SK-N-SH (cell line): ENCODE measurements at regions of chr17 and their contacts with region 1.

Region 1: GRCh38 chr17:57833179-57833939 is 16.5 kb downstream of the MRPS23 start:
- DNase-seq: peak; percentile 77
- H3K4me3 ChIP-seq: peak overlapping the region in 1 of 2 experiments; percentile 21; a peak in 2 of 4 replicates
- H3K27ac ChIP-seq: peak overlapping the region in 1 of 2 experiments; percentile 81; a peak in 2 of 4 replicates
- H3K4me1 ChIP-seq: peaks cover 0 to 10% of the 10 kb centered on the region in 2 experiments; a peak in 1 of 4 replicates
- H3K27me3 ChIP-seq: no peaks in the 10 kb centered on the region
- CTCF ChIP-seq: peak; percentile 100
- EP300 ChIP-seq: 0 out of 4 replicates have a peak, but pooled peaks of 1 of the 2 experiments have one; percentile 20
- RAD21 ChIP-seq: peak; percentile 95

Region 2: GRCh38 chr17:57130761-57131461 is 702.4 kb before region 1 on chr17:
- CTCF ChIA-PET with region 1: interaction called, 79 read pairs
- POLR2A ChIA-PET with region 1: interaction called, 3 read pairs
- DNase-seq: peak; percentile 98
- H3K4me3 ChIP-seq: peak overlapping the region; percentile 28 to 46; a peak in 2 of 4 replicates
- H3K27ac ChIP-seq: peak overlapping the region in 1 of 2 experiments; percentile 50; a peak in 1 of 4 replicates
- H3K4me1 ChIP-seq: peaks cover 0 to 12% of the 10 kb centered on the region in 2 experiments; a peak in 1 of 4 replicates
- H3K27me3 ChIP-seq: no peaks in the 10 kb centered on the region
- CTCF ChIP-seq: peak; percentile 90
- EP300 ChIP-seq: 0 out of 4 replicates have a peak, but pooled peaks of 1 of the 2 experiments have one; percentile 28
- RAD21 ChIP-seq: peak; percentile 92

Region 3: GRCh38 chr17:57552114-57552624 is 281.2 kb before region 1 on chr17:
- CTCF ChIA-PET with region 1: interaction called, 10 read pairs
- POLR2A ChIA-PET with region 1: no interaction called
- DNase-seq: peak; percentile 84
- H3K4me3 ChIP-seq: no peak overlapping the region
- H3K27ac ChIP-seq: peak overlapping the region in 1 of 2 experiments; percentile 99; a peak in 2 of 4 replicates
- H3K4me1 ChIP-seq: peaks cover 6 to 86% of the 10 kb centered on the region in 2 experiments; a peak in 2 of 4 replicates
- H3K27me3 ChIP-seq: no peaks in the 10 kb centered on the region
- CTCF ChIP-seq: peak; percentile 52
- EP300 ChIP-seq: peak in 1 of 2 experiments; percentile 61; a peak in 1 of 4 replicates
- RAD21 ChIP-seq: peak; percentile 65

Region 4: DNA sequence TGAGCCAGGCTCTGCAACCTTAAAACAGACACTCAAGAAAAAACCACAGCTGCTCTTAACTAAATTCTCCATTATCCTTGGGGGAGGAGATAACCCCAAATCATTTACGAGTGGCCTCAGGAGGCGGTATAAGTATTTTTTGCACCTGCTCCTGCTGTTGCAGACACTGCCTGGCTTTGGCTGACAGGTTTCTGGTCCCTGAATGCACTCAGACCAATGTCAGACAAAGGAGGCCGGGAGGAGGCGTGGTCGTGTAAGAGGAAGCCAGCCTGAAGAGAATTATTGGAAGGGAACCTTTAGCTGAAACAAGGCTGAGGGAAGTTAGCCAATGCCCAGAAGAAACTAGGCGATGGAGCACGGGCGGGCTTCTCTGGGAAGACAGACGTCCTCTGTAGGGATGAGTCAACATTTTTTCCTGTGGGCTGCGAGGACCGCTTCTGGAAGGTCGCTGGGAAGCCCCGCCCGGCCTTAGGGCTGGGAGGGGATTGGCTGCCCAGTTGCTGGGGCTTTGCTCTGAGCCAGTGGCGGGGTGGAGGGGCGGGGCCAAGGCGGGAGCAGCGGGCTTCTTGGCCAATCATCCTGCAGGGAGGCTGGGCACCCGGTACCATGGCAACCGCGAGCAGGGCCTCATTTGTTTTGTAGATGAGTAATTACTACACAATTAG is 170.6 kb before region 1 on chr17:
- CTCF ChIA-PET with region 1: interaction called, 25 read pairs
- POLR2A ChIA-PET with region 1: no interaction called
- DNase-seq: peak; percentile 97
- H3K4me3 ChIP-seq: peak overlapping the region; percentile 45 to 47
- H3K27ac ChIP-seq: peak overlapping the region; percentile 99 to 100
- H3K4me1 ChIP-seq: peaks cover 28 to 79% of the 10 kb centered on the region in 2 experiments
- H3K27me3 ChIP-seq: no peaks in the 10 kb centered on the region
- CTCF ChIP-seq: peak; percentile 37
- EP300 ChIP-seq: peak; percentile 54 to 88; a peak in 3 of 4 replicates
- RAD21 ChIP-seq: no peak; the same call in none of the 2 replicates

Region 5: DNA sequence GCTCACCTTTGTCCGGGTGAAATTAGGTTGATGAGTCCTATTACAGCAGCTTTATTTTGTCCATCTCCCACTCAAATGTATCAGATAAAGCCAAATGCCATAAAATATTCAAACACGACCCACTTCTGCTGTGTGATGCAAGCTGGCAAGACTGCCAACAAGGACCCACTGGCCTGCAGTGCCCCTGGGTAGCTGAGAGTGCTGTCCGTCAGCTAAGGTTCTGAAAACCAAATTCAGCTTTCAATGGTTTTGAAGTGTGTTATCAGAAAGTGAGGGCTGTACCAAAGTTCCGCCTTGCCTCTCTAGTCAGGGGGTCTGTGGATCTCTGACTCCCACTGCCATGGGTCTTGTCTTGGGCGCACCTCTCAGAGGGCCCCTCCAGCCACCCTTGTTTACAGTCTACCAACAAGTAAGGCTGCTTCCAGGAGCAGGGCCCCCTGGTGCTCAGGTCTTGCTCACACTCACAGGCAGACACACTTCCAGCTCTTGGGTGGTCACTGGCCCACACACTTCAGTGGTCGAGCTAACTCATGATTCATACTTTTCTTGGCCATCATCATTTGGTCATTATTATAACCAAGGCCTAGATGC is 77.8 kb before region 1 on chr17:
- CTCF ChIA-PET with region 1: interaction called, 37 read pairs
- POLR2A ChIA-PET with region 1: no interaction called
- DNase-seq: no peak
- H3K4me3 ChIP-seq: no peak overlapping the region
- H3K27ac ChIP-seq: peak overlapping the region in 1 of 2 experiments; percentile 44; a peak in 1 of 4 replicates
- H3K4me1 ChIP-seq: peaks cover 0 to 51% of the 10 kb centered on the region in 2 experiments; a peak in 2 of 4 replicates
- H3K27me3 ChIP-seq: peaks cover 7% of the 10 kb centered on the region; the same call in 1 of the 2 replicates
- CTCF ChIP-seq: no peak
- EP300 ChIP-seq: no peak
- RAD21 ChIP-seq: no peak

Region 6: GRCh38 chr17:57803025-57803424 is 30.3 kb before region 1 on chr17:
- CTCF ChIA-PET with region 1: interaction called, 187 read pairs
- POLR2A ChIA-PET with region 1: no interaction called
- DNase-seq: no peak
- H3K4me3 ChIP-seq: no peak overlapping the region
- H3K27ac ChIP-seq: no peak overlapping the region
- H3K4me1 ChIP-seq: peaks cover 0 to 4% of the 10 kb centered on the region in 2 experiments; a peak in 1 of 4 replicates
- H3K27me3 ChIP-seq: no peaks in the 10 kb centered on the region
- CTCF ChIP-seq: no peak
- EP300 ChIP-seq: no peak
- RAD21 ChIP-seq: no peak

Region 7: DNA sequence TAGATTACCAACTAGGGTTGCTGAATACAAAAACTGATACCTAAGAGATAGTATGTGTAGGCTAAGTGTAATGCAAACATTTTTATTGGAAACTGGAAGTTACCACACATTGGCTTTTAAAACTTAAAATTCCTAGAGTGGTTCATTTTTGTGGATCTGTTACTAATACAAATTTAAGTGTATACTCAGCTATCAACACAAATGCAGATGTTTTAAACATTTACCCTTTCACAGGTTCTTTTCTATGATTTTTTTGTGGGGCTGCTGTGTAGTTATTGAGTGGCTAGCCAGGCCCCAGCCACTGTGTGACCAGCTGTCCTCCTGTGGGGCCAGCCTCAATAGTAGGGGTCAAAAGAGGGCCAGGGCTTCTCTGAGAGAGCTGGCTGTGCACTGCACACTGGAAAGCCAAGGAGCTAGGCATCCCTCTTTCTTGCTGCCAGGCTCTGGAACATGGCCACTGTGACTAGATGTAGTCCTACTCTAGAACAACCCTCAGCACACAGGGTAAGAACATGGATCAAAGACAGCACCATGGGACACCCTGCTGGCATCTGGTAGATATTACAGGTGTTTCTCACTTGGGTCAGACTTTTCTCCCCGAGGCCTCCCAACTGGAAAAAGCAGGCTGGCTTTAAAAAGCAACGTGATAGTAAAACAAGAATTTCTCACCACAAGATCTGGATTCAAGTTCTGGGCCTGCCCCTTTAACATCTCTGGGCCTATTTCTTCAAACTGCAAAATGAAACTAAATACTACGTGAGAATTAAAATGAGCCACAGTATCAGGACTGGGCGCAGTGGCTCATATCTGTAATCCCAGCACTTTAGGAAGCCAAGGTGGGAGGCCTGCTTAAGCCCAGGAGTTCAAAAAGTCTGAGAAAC is 162.0 kb after region 1 on chr17:
- CTCF ChIA-PET with region 1: interaction called, 18 read pairs
- POLR2A ChIA-PET with region 1: interaction called, 3 read pairs
- DNase-seq: peak; percentile 79
- H3K4me3 ChIP-seq: no peak overlapping the region
- H3K27ac ChIP-seq: peak overlapping the region; percentile 18 to 33; a peak in 3 of 4 replicates
- H3K4me1 ChIP-seq: peaks cover 0 to 13% of the 10 kb centered on the region in 2 experiments; a peak in 2 of 4 replicates
- H3K27me3 ChIP-seq: no peaks in the 10 kb centered on the region
- CTCF ChIP-seq: peak; percentile 87
- EP300 ChIP-seq: no peak
- RAD21 ChIP-seq: peak; percentile 97